ENCODE measurements at regions of chr10 and their contacts with region 1.

Region 1: DNA sequence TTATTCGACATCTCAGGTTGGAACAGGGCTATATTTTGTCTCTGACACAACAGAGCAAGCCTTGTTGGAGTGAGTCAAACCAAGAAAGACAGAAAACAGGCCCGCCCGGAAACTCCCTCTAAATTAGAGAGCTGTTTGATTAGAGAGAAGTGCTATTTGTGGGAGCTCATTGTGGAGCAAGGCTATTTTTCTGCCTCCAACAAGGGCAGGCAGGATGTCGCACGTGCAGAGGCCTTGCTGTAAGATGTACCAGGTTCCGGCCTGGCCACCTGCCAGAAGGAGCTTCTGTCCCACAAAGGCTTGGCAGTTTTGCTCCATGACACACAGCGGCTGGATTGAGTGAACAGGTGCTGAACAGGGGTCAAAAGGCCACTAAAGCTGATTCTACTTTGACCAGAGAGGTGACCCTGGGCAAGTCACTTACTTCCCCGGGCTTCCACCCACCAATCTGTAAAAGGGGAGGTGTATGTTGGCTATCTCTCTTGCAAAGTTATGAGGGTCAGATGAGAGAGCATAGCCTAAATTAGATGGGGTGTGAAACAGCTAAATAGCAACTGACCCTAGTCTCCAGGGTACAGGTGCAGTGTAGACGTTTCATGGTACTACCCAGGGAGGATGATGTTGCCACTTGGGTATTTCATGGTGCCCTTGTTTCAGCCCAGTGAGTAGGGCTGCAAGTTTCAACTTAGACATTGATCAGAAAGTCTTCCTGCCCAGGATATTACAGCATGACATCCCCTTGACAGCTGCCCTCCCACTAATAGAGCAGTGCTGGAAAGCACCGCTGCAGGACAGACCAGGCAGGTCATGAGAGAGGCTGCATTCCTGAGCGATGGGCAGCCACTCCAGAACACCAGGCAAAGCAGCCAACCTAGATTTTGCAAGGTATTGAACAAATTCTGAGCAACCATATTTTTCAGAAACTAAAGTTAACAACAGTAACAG is 62.0 kb downstream of the VSTM4 start:
- DNase-seq: peak; percentile 99
- H3K4me3 ChIP-seq: peak overlapping the region; percentile 39
- H3K27ac ChIP-seq: peak overlapping the region; percentile 91
- H3K4me1 ChIP-seq: peaks cover 73% of the 10 kb centered on the region
- CTCF ChIP-seq: no peak

Region 2: GRCh38 chr10:48981310-48981907 is 71.9 kb before region 1 on chr10:
- CTCF ChIA-PET with region 1: no interaction called
- POLR2A ChIA-PET with region 1: no interaction called
- intact Hi-C with region 1: loop called (anchors 2 kb)
- DNase-seq: peak; percentile 74
- H3K4me3 ChIP-seq: no peak overlapping the region
- H3K27ac ChIP-seq: no peak overlapping the region
- H3K4me1 ChIP-seq: peaks cover 11% of the 10 kb centered on the region
- CTCF ChIP-seq: peak; percentile 96

Region 3: GRCh38 chr10:49076741-49077521 is 23.6 kb after region 1 on chr10:
- CTCF ChIA-PET with region 1: interaction called, 4 read pairs
- POLR2A ChIA-PET with region 1: interaction called, 4 read pairs
- intact Hi-C with region 1: loop called (anchors 2 kb)
- DNase-seq: peak; percentile 54
- H3K4me3 ChIP-seq: no peak overlapping the region
- H3K27ac ChIP-seq: no peak overlapping the region
- H3K4me1 ChIP-seq: peaks cover 48% of the 10 kb centered on the region
- CTCF ChIP-seq: no peak

Region 4: DNA sequence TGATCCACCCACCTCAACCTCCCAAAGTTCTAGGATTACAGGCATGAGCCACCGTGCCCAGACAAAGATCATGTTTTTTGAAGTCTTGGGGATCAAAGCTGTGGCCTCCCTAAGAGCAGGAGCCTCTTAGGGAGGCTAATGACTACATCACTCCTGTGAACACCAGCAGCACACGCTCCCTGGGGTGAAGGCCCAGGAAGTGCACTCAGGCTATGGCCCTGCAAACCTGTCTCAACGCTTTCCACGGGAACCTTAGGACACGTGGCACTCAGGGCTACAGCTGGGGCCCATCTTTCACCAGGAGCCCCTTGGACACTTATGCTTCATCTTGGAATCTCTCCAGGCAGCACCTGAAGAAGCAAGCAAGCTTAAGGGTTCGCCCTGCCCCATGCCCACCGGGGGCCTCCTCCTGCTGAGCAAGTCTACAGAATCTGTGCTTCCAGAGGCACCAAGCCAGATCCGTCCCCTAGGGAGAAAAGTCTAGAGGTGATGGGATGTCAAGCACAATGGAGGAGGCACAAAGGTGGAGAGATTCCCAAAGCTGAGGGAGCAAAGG is 43.6 kb after region 1 on chr10:
- CTCF ChIA-PET with region 1: no interaction called
- POLR2A ChIA-PET with region 1: no interaction called
- intact Hi-C with region 1: no loop called
- DNase-seq: no peak
- H3K4me3 ChIP-seq: no peak overlapping the region
- H3K27ac ChIP-seq: no peak overlapping the region
- H3K4me1 ChIP-seq: no peaks in the 10 kb centered on the region
- CTCF ChIP-seq: no peak

Region 5: GRCh38 chr10:49119746-49120145 is 66.4 kb after region 1 on chr10:
- CTCF ChIA-PET with region 1: no interaction called
- POLR2A ChIA-PET with region 1: no interaction called
- intact Hi-C with region 1: loop called (anchors 2 kb)
- DNase-seq: no peak
- H3K4me3 ChIP-seq: no peak overlapping the region
- H3K27ac ChIP-seq: no peak overlapping the region
- H3K4me1 ChIP-seq: peaks cover 16% of the 10 kb centered on the region
- CTCF ChIP-seq: no peak

Region 6: DNA sequence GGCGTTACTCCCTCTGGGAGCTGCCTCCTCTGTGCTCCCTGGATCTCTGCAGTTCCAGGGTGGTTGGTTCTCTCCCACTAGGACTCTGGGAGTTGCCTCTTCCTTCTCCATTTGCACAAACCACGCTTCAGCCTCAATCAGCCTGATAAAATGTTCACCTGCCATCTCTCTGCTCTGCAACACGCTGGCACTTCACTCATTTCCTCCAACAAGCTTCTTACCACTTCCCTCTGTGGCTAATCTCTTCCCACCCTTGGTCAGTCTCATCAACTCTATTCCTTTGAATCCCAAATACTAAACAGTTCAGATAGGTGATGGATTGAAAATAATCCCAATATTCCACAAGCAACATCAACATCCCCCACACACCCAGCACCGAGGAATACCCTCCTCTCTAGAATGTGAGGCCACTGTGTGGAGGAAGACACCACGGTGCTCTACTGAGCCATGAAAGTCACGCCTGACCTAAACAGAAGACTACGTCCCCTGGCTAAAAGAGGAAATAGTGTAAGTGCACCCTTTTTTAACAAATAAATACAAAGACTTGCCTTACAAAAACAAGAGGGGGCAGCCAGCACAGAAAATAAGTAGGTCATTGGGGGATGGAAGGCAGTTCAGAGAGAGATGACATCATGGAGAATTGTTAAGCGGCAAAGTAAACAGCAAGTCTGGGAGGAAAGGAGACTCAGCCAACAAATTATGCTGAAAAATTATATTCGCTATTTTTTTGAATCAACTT is 82.4 kb after region 1 on chr10:
- CTCF ChIA-PET with region 1: no interaction called
- POLR2A ChIA-PET with region 1: interaction called, 5 read pairs
- intact Hi-C with region 1: loop called (anchors 1 kb)
- DNase-seq: peak; percentile 91
- H3K4me3 ChIP-seq: peak overlapping the region; percentile 36
- H3K27ac ChIP-seq: peak overlapping the region; percentile 87
- H3K4me1 ChIP-seq: peaks cover 40% of the 10 kb centered on the region
- CTCF ChIP-seq: 0 out of 2 replicates have a peak, but pooled peaks have one; percentile 27

Region 7: DNA sequence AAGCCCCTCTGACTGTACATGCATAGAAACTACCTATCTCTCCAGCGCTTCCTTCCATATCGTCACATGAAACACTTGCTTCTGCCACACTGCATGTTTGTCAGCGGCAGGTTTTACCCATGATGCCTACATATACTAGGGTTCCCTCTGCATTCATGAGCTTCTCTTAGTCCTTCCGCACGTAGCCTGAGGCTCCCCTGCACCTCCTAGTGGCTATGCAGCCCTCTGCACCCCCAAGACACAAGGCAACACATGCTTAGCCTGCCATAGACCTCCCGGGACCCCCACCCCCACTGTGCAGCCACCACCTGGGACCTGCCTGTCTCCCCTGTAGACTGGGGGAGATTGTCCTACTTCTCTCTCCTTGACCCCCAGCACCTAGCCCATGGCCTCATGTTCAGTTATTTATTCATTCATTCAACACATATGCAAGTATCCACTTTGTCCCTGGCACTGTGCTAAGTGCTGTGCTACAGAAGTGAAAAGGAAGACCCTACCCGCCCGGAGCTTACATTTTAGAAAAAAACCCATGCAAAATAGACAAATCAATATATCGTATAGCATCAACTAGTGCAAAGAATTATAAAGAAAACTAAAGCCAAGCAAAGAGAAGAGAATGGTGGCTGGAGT is 111.3 kb after region 1 on chr10:
- CTCF ChIA-PET with region 1: interaction called, 4 read pairs
- POLR2A ChIA-PET with region 1: interaction called, 3 read pairs
- intact Hi-C with region 1: loop called (anchors 1 kb)
- DNase-seq: peak; percentile 92
- H3K4me3 ChIP-seq: no peak overlapping the region
- H3K27ac ChIP-seq: no peak overlapping the region
- H3K4me1 ChIP-seq: peaks cover 15% of the 10 kb centered on the region
- CTCF ChIP-seq: peak; percentile 98

Measured in OCI-LY7 (cell line).